Gastrocnemius medialis (tissue), 4 donors: ENCODE measurements at regions of chr1 and their contacts with region 1.

Region 1: GRCh38 chr1:188476606-188477005 is 1647.9 kb downstream of the PLA2G4A start:
- DNase-seq: no peak
- ATAC-seq: no peak
- H3K4me3 ChIP-seq: no peak overlapping the region
- H3K27ac ChIP-seq: no peak overlapping the region
- H3K4me1 ChIP-seq: no peaks in the 10 kb centered on the region
- H3K27me3 ChIP-seq: no peaks in the 10 kb centered on the region
- CTCF ChIP-seq: no peak
- POLR2A ChIP-seq: no peak

Region 2: GRCh38 chr1:188557052-188557451 is 80.4 kb after region 1 on chr1:
- in situ Hi-C with region 1: no loop called
- intact Hi-C with region 1: no loop called
- DNase-seq: no peak
- ATAC-seq: no peak
- H3K4me3 ChIP-seq: no peak overlapping the region
- H3K27ac ChIP-seq: no peak overlapping the region
- H3K4me1 ChIP-seq: no peaks in the 10 kb centered on the region
- H3K27me3 ChIP-seq: no peaks in the 10 kb centered on the region
- CTCF ChIP-seq: no peak
- POLR2A ChIP-seq: no peak

Region 3: GRCh38 chr1:188877668-188878067 is 401.1 kb after region 1 on chr1:
- in situ Hi-C with region 1: no loop called
- intact Hi-C with region 1: no loop called
- DNase-seq: no peak
- ATAC-seq: no peak
- H3K4me3 ChIP-seq: no peak overlapping the region
- H3K27ac ChIP-seq: no peak overlapping the region
- H3K4me1 ChIP-seq: no peaks in the 10 kb centered on the region
- H3K27me3 ChIP-seq: no peaks in the 10 kb centered on the region
- CTCF ChIP-seq: no peak
- POLR2A ChIP-seq: no peak

Region 4: GRCh38 chr1:189036628-189037027 is 560.0 kb after region 1 on chr1:
- in situ Hi-C with region 1: no loop called
- intact Hi-C with region 1: loop called (anchors 5 kb)
- DNase-seq: no peak
- ATAC-seq: no peak
- H3K4me3 ChIP-seq: no peak overlapping the region
- H3K27ac ChIP-seq: no peak overlapping the region
- H3K4me1 ChIP-seq: no peaks in the 10 kb centered on the region
- H3K27me3 ChIP-seq: no peaks in the 10 kb centered on the region
- CTCF ChIP-seq: no peak
- POLR2A ChIP-seq: no peak